Activated naive CD4-positive, alpha-beta T cell treated with anti-CD3 and anti-CD28 coated beads, Interleukin-2, amount 10 ng/mL, durations not matched to agents 7 days and 5 days (primary cell): ENCODE measurements at regions of chr1 and their contacts with region 1.

Region 1: DNA sequence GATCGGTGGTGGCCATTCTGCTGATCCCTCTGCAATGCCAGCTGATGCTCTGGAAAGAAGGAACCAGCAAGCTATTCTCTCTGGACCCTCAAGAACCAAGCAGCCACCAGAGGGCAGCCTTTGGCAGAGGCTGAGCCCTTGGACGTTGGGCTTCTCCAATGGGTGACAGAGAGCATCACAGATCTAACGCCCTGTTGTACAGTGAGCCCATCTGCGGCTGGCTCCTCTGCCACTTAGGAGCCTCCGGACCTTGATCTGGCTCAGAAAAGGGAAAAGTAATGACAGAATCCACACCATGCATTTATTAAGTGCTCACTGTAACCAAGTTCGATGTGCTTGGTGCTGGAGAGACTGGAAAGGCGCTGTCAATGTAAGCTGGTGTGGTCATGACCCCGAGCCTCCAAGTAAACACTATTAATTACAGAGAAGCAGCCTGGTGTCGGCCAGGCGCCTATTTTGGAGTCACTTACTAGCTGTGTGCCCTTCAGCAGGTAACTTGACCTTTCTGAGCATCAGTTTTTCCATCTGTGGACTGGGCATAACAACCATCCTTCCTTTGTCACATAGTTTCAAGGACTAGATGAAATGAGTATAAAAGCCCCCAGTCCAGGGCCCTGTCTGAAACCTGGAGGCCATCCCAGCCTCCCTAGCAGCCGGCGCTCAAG is 34.9 kb downstream of the ECE1 start:
- DNase-seq: peak; percentile 90
- H3K4me3 Mint-ChIP-seq: no peak overlapping the region
- H3K27ac Mint-ChIP-seq: peak overlapping the region; percentile 12
- H3K4me1 Mint-ChIP-seq: peaks cover 35% of the 10 kb centered on the region
- H3K27me3 Mint-ChIP-seq: no peaks in the 10 kb centered on the region

Region 2: DNA sequence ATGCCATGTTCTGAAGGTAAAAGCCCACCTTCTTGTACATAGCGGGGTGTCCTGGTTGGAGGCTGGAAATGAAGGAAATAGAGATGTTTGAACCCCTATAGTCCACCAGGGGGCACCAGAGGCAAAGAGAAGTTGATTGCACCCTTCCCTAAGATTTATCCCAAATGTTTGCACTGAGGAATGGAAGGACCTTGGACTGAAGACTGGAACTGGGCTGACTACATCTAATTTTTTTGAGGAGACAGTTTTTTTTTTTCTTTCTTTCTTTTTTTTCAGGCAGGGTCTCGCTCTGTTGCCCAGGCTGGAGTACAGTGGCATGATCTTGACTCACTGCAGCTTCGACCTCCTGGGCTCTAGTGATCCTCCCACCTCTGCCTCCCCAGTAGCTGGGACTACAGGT is 23.4 kb before region 1 on chr1:
- CTCF ChIA-PET with region 1: interaction called, 15 read pairs
- DNase-seq: peak; percentile 43
- H3K4me3 Mint-ChIP-seq: no peak overlapping the region
- H3K27ac Mint-ChIP-seq: peak overlapping the region; percentile 42
- H3K4me1 Mint-ChIP-seq: no peaks in the 10 kb centered on the region
- H3K27me3 Mint-ChIP-seq: no peaks in the 10 kb centered on the region

Region 3: GRCh38 chr1:21324368-21325141 is 69.1 kb after region 1 on chr1:
- CTCF ChIA-PET with region 1: interaction called, 20 read pairs
- DNase-seq: peak; percentile 65
- H3K4me3 Mint-ChIP-seq: peak overlapping the region; percentile 45
- H3K27ac Mint-ChIP-seq: peak overlapping the region; percentile 92
- H3K4me1 Mint-ChIP-seq: peaks cover 81% of the 10 kb centered on the region
- H3K27me3 Mint-ChIP-seq: no peaks in the 10 kb centered on the region

Region 4: DNA sequence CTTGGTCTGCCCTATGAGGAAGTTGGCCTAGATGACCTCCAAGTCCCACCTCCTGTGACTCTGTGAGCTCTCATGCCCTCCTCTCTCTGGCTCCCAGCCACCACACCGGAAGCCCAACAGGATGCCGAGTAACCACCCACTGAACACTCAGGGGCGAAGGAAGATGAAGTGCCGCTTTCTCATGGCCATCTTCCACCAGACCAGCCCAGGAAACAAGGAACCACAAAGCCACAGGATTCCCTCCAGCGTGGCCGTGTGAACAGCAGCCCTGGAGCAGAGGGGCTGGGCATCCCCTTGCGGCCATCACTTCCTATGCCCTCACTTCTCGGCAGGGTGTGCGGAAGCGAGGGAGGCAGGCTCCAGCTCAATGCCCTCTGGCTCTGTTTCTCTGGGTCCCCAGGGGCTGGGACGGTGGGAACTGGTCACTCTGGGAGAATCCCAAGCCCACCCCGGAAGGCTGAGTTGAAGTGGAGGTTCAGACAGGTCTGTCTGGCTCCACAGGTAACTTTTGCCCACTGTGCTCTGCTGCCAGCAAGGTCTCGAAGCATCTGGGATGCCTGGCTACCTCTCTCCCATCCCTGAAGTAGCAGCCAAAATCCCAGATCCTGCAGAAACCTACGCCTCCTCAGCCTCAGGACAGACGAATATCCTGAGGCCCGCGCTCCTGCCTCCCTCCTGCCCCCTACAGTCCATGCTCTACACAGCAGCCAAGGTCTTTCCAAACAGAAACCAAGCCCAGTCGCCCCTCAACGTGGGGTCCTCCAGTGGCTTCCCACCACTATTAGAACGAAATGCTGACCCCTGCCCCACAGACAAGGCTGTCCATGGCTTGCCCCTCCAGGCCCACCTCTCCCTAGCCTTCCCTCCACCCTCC is 79.0 kb after region 1 on chr1:
- CTCF ChIA-PET with region 1: interaction called, 35 read pairs
- DNase-seq: peak; percentile 88
- H3K4me3 Mint-ChIP-seq: peak overlapping the region; percentile 72
- H3K27ac Mint-ChIP-seq: peak overlapping the region; percentile 96
- H3K4me1 Mint-ChIP-seq: peaks cover 91% of the 10 kb centered on the region
- H3K27me3 Mint-ChIP-seq: no peaks in the 10 kb centered on the region

Region 5: DNA sequence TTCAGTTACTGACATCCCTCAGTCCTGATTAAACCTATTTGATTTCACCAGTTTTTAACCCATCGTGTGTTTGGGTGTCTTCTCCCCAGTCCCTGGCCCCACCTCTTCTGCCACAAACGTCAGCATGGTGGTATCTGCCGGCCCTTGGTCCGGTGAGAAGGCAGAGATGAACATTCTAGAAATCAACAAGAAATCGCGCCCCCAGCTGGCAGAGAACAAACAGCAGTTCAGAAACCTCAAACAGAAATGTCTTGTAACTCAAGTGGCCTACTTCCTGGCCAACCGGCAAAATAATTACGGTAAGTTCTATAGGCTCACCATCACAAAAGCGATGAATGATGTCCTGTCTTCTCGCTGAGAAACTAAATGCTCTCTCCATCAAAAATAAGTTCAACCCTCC is 213.2 kb after region 1 on chr1:
- CTCF ChIA-PET with region 1: no interaction called
- DNase-seq: peak; percentile 47
- H3K4me3 Mint-ChIP-seq: no peak overlapping the region
- H3K27ac Mint-ChIP-seq: no peak overlapping the region
- H3K4me1 Mint-ChIP-seq: no peaks in the 10 kb centered on the region
- H3K27me3 Mint-ChIP-seq: no peaks in the 10 kb centered on the region